PC-3 (cell line): ENCODE measurements at regions of chr3 and their contacts with region 1.

Region 1: DNA sequence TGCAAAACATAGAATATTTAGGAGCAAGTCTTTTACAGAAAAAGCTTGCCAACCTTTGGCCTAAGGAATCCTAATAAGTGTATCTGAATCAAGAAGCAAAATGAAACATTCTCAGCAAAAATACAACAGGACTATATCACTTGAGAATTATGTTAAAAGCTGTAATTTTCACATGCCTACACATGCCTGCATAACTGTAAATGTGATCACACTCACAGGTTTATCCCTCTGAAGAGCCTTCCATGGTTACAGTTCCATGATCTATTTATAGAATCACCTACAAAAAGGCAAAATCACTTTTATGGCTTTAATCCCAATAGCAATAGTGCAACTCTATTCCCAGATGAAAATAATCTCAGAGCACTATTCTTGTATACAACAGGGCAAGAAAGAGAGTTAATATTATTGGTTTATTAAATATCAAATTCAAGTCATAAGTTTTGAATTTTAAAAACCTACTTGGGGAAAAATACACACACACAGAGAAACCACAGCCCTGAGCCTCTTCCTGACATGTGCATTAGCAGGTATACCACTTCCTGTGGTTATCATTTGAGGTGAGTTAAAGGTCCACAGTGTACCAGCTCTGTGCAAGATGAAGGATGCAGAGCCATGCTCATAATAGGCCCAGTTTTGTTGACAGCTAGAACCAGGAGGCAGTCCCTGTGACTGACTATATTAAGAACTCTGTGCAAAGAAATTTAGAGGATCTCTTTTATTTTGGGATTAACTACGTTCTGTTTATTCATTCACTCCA is 252.5 kb upstream of the TGFBR2 start:
- DNase-seq: peak; percentile 65
- ATAC-seq: no peak; the same call in 1 of the 2 replicates
- H3K4me3 ChIP-seq: no peak overlapping the region
- H3K27ac ChIP-seq: peak overlapping the region; percentile 69
- H3K4me1 ChIP-seq: peaks cover 90% of the 10 kb centered on the region
- H3K27me3 ChIP-seq: no peaks in the 10 kb centered on the region
- CTCF ChIP-seq: no peak

Region 2: GRCh38 chr3:30042274-30042859 is 311.5 kb before region 1 on chr3:
- CTCF ChIA-PET with region 1: no interaction called
- POLR2A ChIA-PET with region 1: no interaction called
- intact Hi-C with region 1: loop called (anchors 10 kb)
- DNase-seq: peak; percentile 84
- ATAC-seq: peak; percentile 87
- H3K4me3 ChIP-seq: no peak overlapping the region
- H3K27ac ChIP-seq: no peak overlapping the region
- H3K4me1 ChIP-seq: no peaks in the 10 kb centered on the region
- H3K27me3 ChIP-seq: no peaks in the 10 kb centered on the region
- CTCF ChIP-seq: peak; percentile 93

Region 3: DNA sequence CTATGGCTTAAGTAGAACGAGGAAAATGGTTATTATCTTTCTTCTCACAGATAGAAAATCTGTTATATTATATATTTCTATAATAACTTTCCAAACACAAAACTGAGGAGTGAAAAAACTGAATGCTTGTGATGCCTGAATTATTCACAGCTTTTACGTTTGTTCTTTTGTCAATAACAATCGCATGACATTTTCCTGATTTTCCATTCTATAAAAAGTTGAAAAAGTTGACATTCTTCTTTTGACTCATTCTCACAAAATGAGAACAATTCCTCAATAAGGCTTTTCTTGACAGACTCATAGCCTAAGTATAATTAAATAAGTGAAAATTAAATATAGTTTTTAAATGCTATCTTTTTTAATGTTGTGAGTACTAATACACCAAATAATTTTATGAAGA is 36.3 kb before region 1 on chr3:
- CTCF ChIA-PET with region 1: interaction called, 4 read pairs
- POLR2A ChIA-PET with region 1: no interaction called
- intact Hi-C with region 1: loop called (anchors 2 kb)
- DNase-seq: peak; percentile 43
- ATAC-seq: no peak
- H3K4me3 ChIP-seq: no peak overlapping the region
- H3K27ac ChIP-seq: peak overlapping the region; percentile 40
- H3K4me1 ChIP-seq: peaks cover 7% of the 10 kb centered on the region; the same call in 1 of the 2 replicates
- H3K27me3 ChIP-seq: no peaks in the 10 kb centered on the region
- CTCF ChIP-seq: no peak

Region 4: DNA sequence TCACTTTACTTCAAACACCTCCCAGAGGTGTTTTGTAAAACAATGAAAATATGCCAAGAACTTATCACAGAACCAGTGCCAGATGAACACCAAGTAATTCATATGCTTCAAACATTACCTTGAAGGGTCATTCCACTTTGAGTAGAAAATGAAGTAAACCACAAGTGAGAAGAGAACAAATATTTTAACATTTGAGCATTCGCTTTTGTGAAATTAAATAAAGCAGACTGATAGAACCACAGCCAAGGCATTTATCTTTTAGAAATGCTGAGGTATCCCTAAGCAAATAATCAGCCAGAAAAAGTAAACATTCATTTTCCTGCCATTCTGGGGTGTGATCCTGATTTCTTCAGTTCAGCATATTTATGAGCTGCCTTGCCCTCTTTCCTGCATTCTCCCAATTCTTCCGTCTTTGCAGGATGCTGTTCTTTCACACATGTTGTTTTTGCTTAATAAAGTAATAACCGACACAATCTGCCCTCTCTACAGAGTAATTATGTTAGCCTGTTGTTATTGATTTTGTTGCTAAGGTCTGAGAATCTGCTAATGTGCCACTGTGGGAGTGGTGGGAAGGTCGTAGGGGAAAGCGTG is 16.9 kb after region 1 on chr3:
- CTCF ChIA-PET with region 1: no interaction called
- POLR2A ChIA-PET with region 1: no interaction called
- intact Hi-C with region 1: loop called (anchors 1 kb)
- DNase-seq: peak; percentile 83
- ATAC-seq: peak; percentile 94
- H3K4me3 ChIP-seq: no peak overlapping the region
- H3K27ac ChIP-seq: peak overlapping the region; percentile 39
- H3K4me1 ChIP-seq: peaks cover 30% of the 10 kb centered on the region
- H3K27me3 ChIP-seq: no peaks in the 10 kb centered on the region
- CTCF ChIP-seq: no peak

Region 5: DNA sequence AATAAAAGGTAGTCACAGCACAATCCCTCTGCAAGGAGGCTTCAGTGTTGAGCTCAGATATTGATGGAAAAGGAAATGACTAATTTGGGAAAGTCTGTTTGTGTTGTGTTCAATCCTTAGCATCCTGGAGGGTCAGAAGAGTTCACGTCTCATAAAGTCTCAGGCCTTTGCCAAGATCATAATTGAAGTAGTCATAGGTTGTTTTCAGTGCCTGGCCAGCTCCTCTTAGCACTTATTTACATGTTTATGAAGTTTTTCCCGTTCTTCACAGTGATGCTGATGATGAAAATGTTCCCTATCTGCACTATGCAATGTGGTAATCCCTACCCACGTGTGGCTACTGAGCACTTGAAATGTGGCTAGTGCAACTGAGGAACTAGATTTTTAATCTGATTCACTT is 190.9 kb after region 1 on chr3:
- CTCF ChIA-PET with region 1: no interaction called
- POLR2A ChIA-PET with region 1: no interaction called
- intact Hi-C with region 1: loop called (anchors 2 kb)
- DNase-seq: peak; percentile 95
- ATAC-seq: peak; percentile 96
- H3K4me3 ChIP-seq: no peak overlapping the region
- H3K27ac ChIP-seq: peak overlapping the region; percentile 88
- H3K4me1 ChIP-seq: peaks cover 25% of the 10 kb centered on the region
- H3K27me3 ChIP-seq: no peaks in the 10 kb centered on the region
- CTCF ChIP-seq: no peak

Region 6: DNA sequence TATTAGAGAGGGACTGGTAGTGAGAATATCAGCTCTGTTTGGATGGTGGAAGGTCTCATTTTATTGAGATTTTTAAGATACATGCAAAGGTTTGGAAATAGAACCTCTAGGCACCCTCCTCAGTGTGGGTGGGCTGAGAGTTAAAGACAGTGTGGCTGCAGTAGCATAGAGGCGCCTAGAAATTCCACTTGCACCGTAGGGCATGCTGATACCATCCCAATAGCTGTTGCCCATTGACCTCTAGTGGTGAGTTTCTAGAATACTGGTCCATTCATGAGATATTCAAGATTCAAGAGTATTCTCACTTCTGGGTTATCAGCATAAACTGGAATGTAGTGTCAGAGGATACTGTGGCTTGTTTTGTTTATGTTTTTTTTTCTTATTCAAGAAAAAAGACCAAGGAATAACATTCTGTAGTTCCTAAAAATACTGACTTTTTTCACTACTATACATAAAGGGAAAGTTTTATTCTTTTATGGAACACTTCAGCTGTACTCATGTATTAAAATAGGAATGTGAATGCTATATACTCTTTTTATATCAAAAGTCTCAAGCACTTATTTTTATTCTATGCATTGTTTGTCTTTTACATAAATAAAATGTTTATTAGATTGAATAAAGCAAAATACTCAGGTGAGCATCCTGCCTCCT is 339.7 kb after region 1 on chr3:
- CTCF ChIA-PET with region 1: interaction called, 3 read pairs
- POLR2A ChIA-PET with region 1: no interaction called
- intact Hi-C with region 1: loop called (anchors 1 kb)
- DNase-seq: peak; percentile 82
- ATAC-seq: peak; percentile 49
- H3K4me3 ChIP-seq: no peak overlapping the region
- H3K27ac ChIP-seq: peak overlapping the region; percentile 0; the same call in 1 of the 2 replicates
- H3K4me1 ChIP-seq: peaks cover 35% of the 10 kb centered on the region
- H3K27me3 ChIP-seq: no peaks in the 10 kb centered on the region
- CTCF ChIP-seq: peak; percentile 94